WTC11 (cell line): ENCODE measurements at regions of chr6 and their contacts with region 1.

Region 1: DNA sequence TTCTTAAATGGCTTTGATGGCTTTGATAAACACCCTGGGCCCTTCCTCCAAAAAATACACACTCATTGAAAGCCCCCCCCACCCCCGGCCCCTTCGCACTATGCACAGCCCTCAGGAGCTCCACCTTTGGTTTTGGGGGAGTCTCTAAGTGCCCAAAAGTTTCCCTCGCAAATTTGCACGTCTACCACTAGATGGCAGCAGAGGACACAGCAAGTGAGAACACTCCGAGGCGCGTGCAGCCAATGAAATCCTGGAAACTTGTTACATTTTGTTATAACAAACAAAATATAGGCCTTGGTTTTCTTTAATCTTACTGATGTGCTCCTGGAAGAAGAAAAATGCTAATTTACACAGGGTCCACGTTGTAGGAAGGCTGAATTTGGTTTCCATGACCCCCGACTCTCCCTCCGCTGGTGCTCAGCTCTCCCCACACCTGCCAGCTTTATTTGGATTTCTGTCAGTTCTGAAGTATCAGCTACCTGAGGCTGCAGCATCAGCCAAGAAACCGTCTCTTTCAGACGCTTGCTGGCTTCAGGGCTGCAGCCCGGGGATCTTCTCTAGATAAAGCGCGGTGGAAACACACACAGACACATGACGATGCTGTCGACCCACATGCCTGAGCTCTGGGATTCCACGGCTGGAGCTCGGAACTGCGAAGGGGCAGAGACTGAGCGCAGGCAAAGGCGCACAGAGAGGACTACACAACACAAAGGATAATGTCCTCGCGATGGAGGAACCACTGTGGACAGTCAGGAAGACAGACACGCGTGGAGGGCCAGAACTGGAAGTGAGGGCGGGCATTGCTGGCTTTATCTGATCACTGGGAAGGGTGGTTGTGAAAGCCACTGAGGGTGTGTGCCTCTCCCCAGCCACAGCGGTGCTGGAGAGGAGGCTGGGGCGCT is 148.4 kb upstream of the RPS6KA2 start:
- DNase-seq: peak; percentile 54
- ATAC-seq: peak; percentile 65
- H3K4me3 Mint-ChIP-seq: no peak overlapping the region
- H3K27ac Mint-ChIP-seq: peak overlapping the region; percentile 42; the same call in 1 of the 2 replicates
- H3K4me1 Mint-ChIP-seq: peaks cover 25% of the 10 kb centered on the region
- H3K27me3 Mint-ChIP-seq: peaks cover 3% of the 10 kb centered on the region; the same call in 1 of the 2 replicates
- CTCF ChIP-seq: peak; percentile 64; the same call in 1 of the 2 replicates

Region 2: DNA sequence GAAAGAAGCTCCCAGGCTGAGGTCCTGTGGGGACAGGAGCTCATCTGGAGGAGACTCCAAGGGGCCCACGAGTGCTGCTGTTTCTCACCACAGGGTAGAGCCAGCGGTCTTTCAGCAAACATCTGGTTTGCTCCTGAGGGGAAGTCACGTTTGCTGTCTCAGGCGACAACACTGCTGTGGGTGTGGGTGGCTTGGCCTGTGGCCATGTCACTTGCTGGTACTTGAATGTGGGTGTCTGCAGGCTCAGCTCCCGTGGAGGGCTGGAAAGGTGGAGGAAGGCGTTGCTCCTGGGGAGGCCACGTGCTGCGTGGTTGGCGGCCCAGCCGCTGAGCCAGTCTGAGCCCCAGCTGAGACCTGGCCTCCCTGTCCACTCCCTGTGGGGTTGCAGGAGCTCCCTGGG is 339.9 kb before region 1 on chr6:
- CTCF ChIA-PET with region 1: no interaction called
- POLR2A ChIA-PET with region 1: no interaction called
- DNase-seq: no peak
- ATAC-seq: no peak
- H3K4me3 Mint-ChIP-seq: no peak overlapping the region
- H3K27ac Mint-ChIP-seq: no peak overlapping the region
- H3K4me1 Mint-ChIP-seq: no peaks in the 10 kb centered on the region
- H3K27me3 Mint-ChIP-seq: no peaks in the 10 kb centered on the region
- CTCF ChIP-seq: no peak

Region 3: DNA sequence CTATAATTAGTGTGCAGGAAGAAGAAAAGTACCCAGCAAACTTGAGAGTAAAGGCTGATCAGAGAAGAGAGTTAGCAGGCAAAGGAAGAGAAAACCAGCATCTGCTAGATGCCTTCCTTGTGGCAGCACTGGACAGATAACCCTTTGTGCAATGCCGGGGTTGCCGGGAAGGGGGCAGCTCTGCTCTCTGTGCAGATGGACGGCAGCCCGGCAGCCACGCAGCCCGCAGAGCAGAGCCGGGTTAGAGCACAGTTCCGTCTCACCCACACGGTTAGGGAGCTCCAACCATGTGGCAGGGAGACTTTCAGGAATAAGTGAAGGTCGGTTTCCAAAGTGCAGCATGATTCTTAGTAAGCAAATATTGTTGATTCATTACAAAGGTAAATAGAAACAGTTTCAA is 68.4 kb before region 1 on chr6:
- CTCF ChIA-PET with region 1: interaction called, 22 read pairs
- POLR2A ChIA-PET with region 1: no interaction called
- DNase-seq: peak; percentile 81
- ATAC-seq: peak; percentile 99
- H3K4me3 Mint-ChIP-seq: no peak overlapping the region
- H3K27ac Mint-ChIP-seq: no peak overlapping the region
- H3K4me1 Mint-ChIP-seq: peaks cover 32% of the 10 kb centered on the region
- H3K27me3 Mint-ChIP-seq: peaks cover 35% of the 10 kb centered on the region
- CTCF ChIP-seq: peak; percentile 40

Region 4: DNA sequence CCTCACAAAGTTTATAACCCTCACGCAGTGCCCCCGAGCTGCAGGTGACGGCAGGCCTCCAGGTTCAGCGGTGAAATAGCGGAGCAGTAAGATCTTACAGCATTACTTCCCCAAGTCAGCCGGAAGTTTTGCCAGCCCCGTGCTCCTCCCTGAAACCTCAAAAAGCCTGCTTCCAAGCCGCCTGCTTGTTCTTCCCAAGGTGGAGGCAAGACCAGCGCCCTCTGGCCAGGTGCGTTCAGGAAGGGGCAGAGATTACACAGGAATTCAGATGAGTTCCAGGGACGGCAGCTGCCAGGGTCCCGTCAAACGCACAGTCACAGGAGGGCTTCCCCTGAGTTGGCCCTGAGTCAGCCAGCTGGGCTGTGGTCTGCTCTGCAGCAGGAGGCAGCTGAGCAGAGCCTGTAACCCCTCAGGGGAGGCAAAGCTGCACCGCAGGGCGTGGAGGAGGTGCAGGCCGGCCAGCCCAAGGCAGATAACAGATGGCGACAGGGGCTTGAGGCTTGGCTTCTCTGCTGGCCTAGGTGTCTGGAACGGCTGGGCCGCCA is 24.3 kb before region 1 on chr6:
- CTCF ChIA-PET with region 1: interaction called, 18 read pairs
- POLR2A ChIA-PET with region 1: no interaction called
- DNase-seq: peak; percentile 44
- ATAC-seq: peak; percentile 34
- H3K4me3 Mint-ChIP-seq: no peak overlapping the region
- H3K27ac Mint-ChIP-seq: no peak overlapping the region
- H3K4me1 Mint-ChIP-seq: peaks cover 39% of the 10 kb centered on the region
- H3K27me3 Mint-ChIP-seq: no peaks in the 10 kb centered on the region; the same call in 1 of the 2 replicates
- CTCF ChIP-seq: no peak

Region 5: DNA sequence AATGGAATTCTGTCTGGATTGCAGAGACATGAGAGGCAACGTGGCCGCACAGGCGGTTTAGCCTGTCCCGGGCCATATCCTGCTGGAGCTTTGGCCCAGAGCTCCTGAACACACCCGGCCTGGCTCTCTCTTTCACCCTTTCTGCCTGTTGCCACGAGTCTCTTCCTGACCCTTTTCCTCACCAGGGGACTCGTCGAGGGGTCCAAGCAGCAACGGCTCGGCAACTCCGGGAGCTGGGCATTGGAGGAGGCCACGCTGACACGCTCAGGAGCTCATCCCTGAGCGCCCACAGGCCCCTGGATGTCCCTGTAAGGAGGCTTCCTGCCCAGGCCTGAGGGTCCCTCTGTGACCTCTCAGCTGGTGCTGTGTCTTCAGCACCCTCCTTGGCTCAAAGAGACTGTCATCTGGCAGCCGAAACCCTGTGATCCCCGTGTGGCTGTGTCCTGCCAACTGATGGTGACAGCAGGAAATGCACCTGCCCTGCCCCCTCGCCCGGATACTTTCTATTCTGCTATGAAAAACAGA is 77.1 kb after region 1 on chr6:
- CTCF ChIA-PET with region 1: interaction called, 14 read pairs
- POLR2A ChIA-PET with region 1: no interaction called
- DNase-seq: no peak
- ATAC-seq: no peak
- H3K4me3 Mint-ChIP-seq: no peak overlapping the region
- H3K27ac Mint-ChIP-seq: no peak overlapping the region
- H3K4me1 Mint-ChIP-seq: no peaks in the 10 kb centered on the region; the same call in 1 of the 2 replicates
- H3K27me3 Mint-ChIP-seq: no peaks in the 10 kb centered on the region
- CTCF ChIP-seq: no peak

Region 6: GRCh38 chr6:166932116-166932515 is 156.7 kb after region 1 on chr6:
- CTCF ChIA-PET with region 1: interaction called, 10 read pairs
- POLR2A ChIA-PET with region 1: no interaction called
- DNase-seq: no peak
- ATAC-seq: no peak
- H3K4me3 Mint-ChIP-seq: no peak overlapping the region
- H3K27ac Mint-ChIP-seq: no peak overlapping the region
- H3K4me1 Mint-ChIP-seq: peaks cover 9% of the 10 kb centered on the region
- H3K27me3 Mint-ChIP-seq: no peaks in the 10 kb centered on the region
- CTCF ChIP-seq: no peak

Region 7: DNA sequence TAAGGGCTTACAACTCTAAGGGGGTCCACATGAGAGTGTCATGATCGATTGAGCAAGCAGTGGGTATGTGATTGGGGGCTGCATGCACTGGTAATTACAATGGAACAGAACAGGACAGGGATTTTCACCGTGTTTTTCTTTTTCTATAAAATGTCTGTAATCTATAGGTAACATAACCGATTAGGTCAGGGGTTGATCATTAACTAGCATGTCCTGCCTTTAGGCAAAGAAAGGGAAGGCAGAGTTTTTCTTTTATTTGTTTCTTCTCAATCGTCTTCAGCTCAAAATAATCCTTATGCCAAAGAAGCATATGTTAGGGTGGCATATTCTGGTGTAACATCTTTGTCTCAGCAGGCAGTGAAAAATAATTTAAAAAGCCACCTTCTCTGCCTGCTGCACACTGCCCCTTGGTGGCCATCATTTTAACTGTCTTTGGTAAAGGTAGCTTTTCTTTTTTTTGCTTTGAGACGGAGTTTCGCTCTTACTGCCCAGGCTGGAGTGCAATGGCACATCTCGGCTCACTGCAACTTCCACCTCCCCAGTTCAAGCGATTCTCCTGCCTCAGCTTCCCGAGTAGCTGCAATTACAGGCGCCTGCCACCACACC is 214.1 kb after region 1 on chr6:
- CTCF ChIA-PET with region 1: interaction called, 44 read pairs
- POLR2A ChIA-PET with region 1: no interaction called
- DNase-seq: peak; percentile 16
- ATAC-seq: peak; percentile 62
- H3K4me3 Mint-ChIP-seq: no peak overlapping the region
- H3K27ac Mint-ChIP-seq: peak overlapping the region; percentile 5; the same call in 1 of the 2 replicates
- H3K4me1 Mint-ChIP-seq: peaks cover 38% of the 10 kb centered on the region
- H3K27me3 Mint-ChIP-seq: no peaks in the 10 kb centered on the region
- CTCF ChIP-seq: no peak

Region 8: GRCh38 chr6:167141667-167142432 is 366.4 kb after region 1 on chr6:
- CTCF ChIA-PET with region 1: interaction called, 44 read pairs
- POLR2A ChIA-PET with region 1: no interaction called
- DNase-seq: peak; percentile 78
- ATAC-seq: peak; percentile 77
- H3K4me3 Mint-ChIP-seq: no peak overlapping the region
- H3K27ac Mint-ChIP-seq: no peak overlapping the region
- H3K4me1 Mint-ChIP-seq: peaks cover 54% of the 10 kb centered on the region
- H3K27me3 Mint-ChIP-seq: peaks cover 28% of the 10 kb centered on the region
- CTCF ChIP-seq: peak; percentile 46